Activated B cell treated with CpG ODN at 0.5 μM for 24 hours (primary cell): ENCODE measurements at regions of chr3 and their contacts with region 1.

Region 1: DNA sequence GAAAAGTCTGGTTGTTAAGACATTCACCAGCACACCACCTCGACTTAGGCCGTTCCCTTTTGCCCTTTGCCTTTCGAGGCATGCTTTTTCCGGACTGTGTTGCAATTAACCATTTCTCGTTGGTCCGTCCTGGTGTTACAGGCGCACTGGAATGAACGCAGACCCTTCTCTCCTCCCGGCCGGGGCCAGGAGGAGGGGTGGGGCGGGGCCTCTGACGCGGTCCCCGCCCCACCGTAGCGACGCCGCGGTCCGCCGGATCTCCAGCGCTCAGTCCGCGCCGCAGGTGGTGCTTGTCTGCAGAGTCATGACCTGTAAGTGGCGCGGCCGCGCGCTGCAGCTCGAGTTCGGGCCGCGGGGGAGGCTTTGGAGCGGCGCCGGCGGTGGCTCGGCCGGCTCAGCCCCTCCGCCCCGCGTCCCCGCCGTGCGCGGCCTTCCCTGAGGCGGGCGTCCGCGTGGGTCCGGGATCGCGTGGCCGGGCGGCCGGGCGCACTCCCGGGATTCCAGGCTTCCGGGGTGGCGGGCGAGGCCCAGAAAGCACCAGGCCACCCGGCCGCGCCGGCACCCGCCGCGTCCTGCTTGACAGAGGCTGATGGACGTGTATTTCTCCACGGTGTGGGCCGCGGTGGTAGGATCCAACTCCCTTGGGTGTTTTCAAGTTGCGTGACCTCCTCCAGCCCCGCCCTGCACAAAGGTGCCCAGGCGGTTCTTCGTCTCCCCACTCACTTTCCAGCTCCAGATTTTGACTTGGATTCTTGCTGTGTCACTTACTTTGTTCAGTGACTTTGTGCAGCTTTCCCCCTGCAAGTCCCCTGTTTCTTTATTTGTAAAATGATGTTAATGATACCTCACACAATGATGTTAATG is at the start of gene NIT2:
- DNase-seq: peak; percentile 72
- ATAC-seq: peak; percentile 96
- H3K4me3 Mint-ChIP-seq: peak within 1 kb of the TSS; percentile 91
- H3K27ac Mint-ChIP-seq: peak within 1 kb of the TSS; percentile 92
- H3K4me1 Mint-ChIP-seq: peaks cover 19% of the 10 kb centered on the region
- H3K27me3 Mint-ChIP-seq: no peaks in the 10 kb centered on the region
- CTCF ChIP-seq: no peak
- total RNA-seq, gene NIT2: 52.0 and 55.6 TPM in 2 replicates

Region 2: DNA sequence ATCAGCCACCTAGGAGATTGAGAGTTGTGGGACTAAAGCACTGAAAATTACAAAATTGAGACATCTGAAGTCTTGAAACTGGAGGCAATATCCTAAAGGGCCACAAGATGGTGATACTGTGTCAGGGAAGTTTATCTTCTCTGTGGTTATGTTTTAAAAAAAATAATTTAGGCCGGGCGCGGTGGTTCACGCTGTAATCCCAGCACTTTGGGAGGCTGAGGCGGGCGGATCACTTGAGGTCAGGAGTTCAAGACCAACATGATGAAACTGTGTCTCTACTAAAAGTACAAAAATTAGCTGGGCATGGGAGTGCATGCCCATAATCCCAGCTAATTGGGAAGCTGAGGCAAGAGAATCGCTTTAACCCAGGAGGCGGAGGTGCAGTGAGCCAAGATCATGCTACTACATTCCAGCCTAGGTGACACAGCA is 18.1 kb before region 1 on chr3:
- CTCF ChIA-PET with region 1: interaction called, 3 read pairs
- POLR2A ChIA-PET with region 1: interaction called, 8 read pairs
- intact Hi-C with region 1: loop called (anchors 1 kb)
- DNase-seq: no peak
- ATAC-seq: peak; percentile 68
- H3K4me3 Mint-ChIP-seq: no peak overlapping the region
- H3K27ac Mint-ChIP-seq: no peak overlapping the region
- H3K4me1 Mint-ChIP-seq: peaks cover 2% of the 10 kb centered on the region
- H3K27me3 Mint-ChIP-seq: no peaks in the 10 kb centered on the region
- CTCF ChIP-seq: no peak

Region 3: DNA sequence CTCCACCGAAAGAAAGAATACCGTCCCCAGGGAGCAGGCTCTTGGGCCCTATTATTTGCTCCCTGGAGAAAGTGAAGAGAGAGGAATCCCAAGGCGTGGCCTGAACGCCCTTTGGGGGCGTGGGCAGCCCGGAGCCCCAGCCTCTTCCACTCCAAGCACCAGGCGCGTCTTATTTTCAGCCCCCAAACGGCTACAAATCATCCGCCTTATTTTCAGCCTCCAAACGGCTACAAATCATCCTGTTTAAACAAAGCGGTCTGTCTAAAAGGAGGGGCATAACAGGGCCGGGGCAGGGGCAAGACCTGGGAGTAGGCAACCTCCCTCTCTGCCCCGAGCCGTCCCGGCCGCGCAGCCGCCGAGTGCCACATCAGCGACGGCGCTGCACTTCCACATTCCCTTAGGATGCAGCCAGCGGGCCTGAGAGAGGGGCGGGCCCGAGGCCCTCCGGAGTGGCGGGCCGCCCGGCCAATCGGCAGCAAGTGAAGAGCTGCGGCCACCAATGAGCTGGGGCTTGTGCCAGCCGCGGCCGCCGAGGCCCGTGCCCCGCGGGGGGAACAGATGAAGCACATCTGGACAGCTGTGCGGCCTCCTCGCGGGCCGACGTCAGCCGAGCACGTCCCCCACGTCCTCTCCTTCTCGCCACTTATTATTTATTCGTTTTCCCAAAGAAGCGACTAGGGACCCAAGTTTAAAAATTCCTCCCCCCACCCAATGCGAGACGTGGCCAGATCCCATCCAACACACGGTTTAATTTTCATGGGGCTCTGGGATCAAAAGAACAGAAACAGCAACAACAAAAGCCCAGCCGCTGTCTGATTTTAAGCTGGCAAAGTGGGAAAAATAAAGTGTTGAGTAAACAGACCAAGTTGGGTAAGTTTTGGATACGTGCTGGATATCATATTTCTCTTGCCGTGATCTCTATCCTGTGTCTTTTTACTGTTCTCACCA is 157.6 kb after region 1 on chr3 and contains the start of gene TMEM45A:
- CTCF ChIA-PET with region 1: no interaction called
- POLR2A ChIA-PET with region 1: no interaction called
- intact Hi-C with region 1: loop called (anchors 5 kb)
- DNase-seq: peak; percentile 64
- ATAC-seq: peak; percentile 98
- H3K4me3 Mint-ChIP-seq: peak within 1 kb of the TSS; percentile 85
- H3K27ac Mint-ChIP-seq: no peak within 1 kb of the TSS
- H3K4me1 Mint-ChIP-seq: peaks cover 20% of the 10 kb centered on the region
- H3K27me3 Mint-ChIP-seq: peaks cover 19% of the 10 kb centered on the region
- CTCF ChIP-seq: no peak
- total RNA-seq, gene TMEM45A: 0.10 and 0.13 TPM in 2 replicates

Region 4: DNA sequence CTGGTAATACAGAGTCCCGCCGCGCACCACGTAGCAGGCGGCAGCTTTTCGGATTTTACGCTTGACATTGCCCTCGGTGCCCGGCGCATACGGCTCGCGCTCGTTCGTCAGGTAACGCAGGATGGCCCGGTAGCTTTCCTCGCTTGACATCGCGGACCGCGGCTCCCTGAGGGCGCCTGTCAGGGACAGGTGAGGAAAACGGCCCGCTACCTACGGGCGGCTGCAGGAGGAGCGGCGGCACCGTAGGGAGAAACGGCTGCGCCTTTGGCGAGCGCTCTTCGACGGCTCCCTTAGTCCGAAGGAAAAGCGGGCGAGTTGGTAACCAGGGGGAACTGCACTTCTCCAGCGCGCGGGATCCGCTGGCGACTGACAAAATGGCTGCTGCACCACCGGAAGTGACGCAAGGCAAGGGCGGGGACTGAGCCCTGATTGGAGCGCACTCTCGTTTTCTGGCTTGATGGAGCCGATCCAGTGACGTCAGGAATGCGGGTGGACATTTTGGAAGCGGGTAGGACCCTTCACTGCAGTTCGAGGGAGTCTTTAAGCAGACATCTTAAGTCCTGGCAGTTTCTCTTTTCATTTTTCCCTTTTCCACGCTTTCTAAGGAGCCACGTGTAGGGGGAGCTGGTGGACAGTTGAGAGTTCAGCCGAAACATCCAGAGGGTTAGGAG is 1342.2 kb after region 1 on chr3 and contains the start of gene ZBTB11:
- CTCF ChIA-PET with region 1: no interaction called
- POLR2A ChIA-PET with region 1: no interaction called
- intact Hi-C with region 1: loop called (anchors 10 kb)
- DNase-seq: peak; percentile 99
- ATAC-seq: peak; percentile 68
- H3K4me3 Mint-ChIP-seq: peak within 1 kb of the TSS; percentile 93
- H3K27ac Mint-ChIP-seq: peak within 1 kb of the TSS; percentile 96
- H3K4me1 Mint-ChIP-seq: peaks cover 56% of the 10 kb centered on the region
- H3K27me3 Mint-ChIP-seq: no peaks in the 10 kb centered on the region
- CTCF ChIP-seq: no peak
- total RNA-seq, gene ZBTB11: 26.2 and 28.7 TPM in 2 replicates